SK-N-SH (cell line): ENCODE measurements at regions of chr7 and their contacts with region 1.

Region 1: GRCh38 chr7:92621026-92621540 is 30.9 kb upstream of the FAM133B start:
- DNase-seq: peak; percentile 53
- H3K4me3 ChIP-seq: peak overlapping the region in 1 of 2 experiments; percentile 20; a peak in 2 of 4 replicates
- H3K27ac ChIP-seq: peak overlapping the region; percentile 81 to 83
- H3K4me1 ChIP-seq: peaks cover 9 to 29% of the 10 kb centered on the region in 2 experiments
- H3K27me3 ChIP-seq: no peaks in the 10 kb centered on the region
- CTCF ChIP-seq: peak; percentile 97
- EP300 ChIP-seq: peak; percentile 55 to 69; a peak in 1 of 4 replicates
- RAD21 ChIP-seq: peak; percentile 99

Region 2: DNA sequence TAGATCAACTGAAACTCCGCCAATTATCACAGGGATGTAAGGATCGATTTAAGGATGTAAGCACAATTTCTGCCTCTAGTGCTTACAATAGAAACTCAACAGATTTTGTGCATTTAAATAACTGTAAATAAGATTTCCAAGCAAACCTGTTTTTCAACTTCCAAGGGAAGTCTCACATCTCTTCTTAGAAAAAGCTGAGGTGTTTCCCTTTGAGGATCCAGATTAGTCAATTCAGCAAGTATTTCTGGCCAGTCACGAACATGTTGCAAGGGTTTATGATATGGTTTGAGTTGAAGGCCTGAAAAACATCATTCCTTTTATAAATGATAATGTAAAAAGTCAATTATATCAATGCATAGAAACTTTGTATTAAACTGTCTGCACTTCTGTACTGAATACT is 399.3 kb before region 1 on chr7:
- CTCF ChIA-PET with region 1: no interaction called
- POLR2A ChIA-PET with region 1: no interaction called
- DNase-seq: no peak
- H3K4me3 ChIP-seq: no peak overlapping the region
- H3K27ac ChIP-seq: no peak overlapping the region
- H3K4me1 ChIP-seq: no peaks in the 10 kb centered on the region
- H3K27me3 ChIP-seq: no peaks in the 10 kb centered on the region
- CTCF ChIP-seq: no peak
- EP300 ChIP-seq: no peak
- RAD21 ChIP-seq: no peak

Region 3: DNA sequence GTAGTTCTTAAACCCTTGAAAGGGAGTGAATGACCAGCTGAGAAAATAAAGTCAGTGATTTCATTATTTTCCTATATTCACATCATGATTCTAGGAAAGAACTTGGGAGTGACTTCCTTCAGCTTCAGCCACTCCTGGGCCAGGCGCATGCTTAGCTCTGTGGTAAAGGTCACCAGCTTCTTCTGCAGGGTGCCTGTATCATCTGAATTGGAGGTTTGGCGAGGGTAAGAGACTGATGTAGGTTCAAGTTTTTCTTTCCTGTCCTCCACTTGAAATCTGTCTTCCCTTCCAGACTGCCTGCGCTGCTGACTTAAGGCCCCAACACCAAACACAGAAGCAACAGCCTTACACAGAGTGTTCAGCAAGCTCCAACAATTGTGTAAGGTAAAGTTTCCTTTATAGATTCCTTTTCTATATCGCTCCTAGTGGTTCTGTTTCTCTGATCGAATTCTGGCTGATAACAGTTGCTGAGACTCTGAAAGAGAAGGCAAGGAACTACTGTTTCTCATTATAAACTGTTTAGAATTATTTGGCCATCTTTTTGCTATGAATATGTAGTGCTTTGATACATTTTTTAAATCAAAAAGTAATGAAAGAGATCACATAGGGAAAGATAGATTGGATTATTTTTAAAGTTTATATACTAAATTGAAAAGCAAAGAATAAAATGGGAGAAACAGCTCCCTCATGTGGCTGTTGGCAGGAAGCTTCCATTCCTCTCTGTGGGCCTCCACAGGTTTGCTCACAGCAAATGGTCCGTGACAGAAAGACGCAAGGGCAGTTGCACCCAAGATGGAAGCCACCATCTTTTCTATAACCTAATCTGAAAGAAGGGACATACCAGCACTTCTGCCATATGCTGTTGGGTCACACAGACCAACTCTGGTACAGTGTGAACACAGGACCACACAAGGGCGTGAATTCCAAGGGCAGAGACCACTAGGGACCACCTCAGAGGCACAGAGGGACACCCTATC is 159.8 kb before region 1 on chr7:
- CTCF ChIA-PET with region 1: no interaction called
- POLR2A ChIA-PET with region 1: no interaction called
- DNase-seq: peak; percentile 68
- H3K4me3 ChIP-seq: no peak overlapping the region; a peak in 1 of 4 replicates
- H3K27ac ChIP-seq: no peak overlapping the region
- H3K4me1 ChIP-seq: peaks cover 0 to 4% of the 10 kb centered on the region in 2 experiments; a peak in 2 of 4 replicates
- H3K27me3 ChIP-seq: no peaks in the 10 kb centered on the region
- CTCF ChIP-seq: peak; percentile 98
- EP300 ChIP-seq: no peak
- RAD21 ChIP-seq: peak; percentile 74

Region 4: DNA sequence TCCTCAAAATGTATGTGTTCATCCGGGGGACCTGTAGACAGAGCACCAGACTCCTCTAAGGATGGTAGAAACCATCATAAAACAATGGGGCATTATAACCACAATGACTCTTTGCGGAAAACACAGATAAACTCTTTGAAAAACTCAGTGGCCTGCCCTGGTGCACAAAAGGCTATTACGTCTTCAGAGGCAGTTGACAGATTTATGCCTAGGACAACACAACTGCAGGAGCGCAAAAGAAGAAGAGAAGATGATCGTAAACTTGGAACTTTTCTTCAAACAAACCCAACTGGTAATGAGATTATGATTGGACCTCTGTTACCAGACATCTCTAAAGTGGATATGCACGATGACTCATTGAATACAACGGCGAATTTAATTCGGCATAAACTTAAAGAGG is 86.5 kb before region 1 on chr7:
- CTCF ChIA-PET with region 1: no interaction called
- POLR2A ChIA-PET with region 1: no interaction called
- DNase-seq: no peak
- H3K4me3 ChIP-seq: no peak overlapping the region
- H3K27ac ChIP-seq: no peak overlapping the region
- H3K4me1 ChIP-seq: peaks cover under 1 to 8% of the 10 kb centered on the region in 2 experiments; a peak in 3 of 4 replicates
- H3K27me3 ChIP-seq: no peaks in the 10 kb centered on the region
- CTCF ChIP-seq: no peak
- EP300 ChIP-seq: no peak
- RAD21 ChIP-seq: no peak

Region 5: GRCh38 chr7:92609921-92610518 is 11.1 kb before region 1 on chr7:
- CTCF ChIA-PET with region 1: interaction called, 38 read pairs
- POLR2A ChIA-PET with region 1: no interaction called
- DNase-seq: peak; percentile 43
- H3K4me3 ChIP-seq: no peak overlapping the region
- H3K27ac ChIP-seq: peak overlapping the region in 1 of 2 experiments; percentile 5; a peak in 1 of 4 replicates
- H3K4me1 ChIP-seq: peaks cover 6 to 25% of the 10 kb centered on the region in 2 experiments
- H3K27me3 ChIP-seq: no peaks in the 10 kb centered on the region
- CTCF ChIP-seq: peak; percentile 66
- EP300 ChIP-seq: no peak
- RAD21 ChIP-seq: peak; percentile 40

Region 6: DNA sequence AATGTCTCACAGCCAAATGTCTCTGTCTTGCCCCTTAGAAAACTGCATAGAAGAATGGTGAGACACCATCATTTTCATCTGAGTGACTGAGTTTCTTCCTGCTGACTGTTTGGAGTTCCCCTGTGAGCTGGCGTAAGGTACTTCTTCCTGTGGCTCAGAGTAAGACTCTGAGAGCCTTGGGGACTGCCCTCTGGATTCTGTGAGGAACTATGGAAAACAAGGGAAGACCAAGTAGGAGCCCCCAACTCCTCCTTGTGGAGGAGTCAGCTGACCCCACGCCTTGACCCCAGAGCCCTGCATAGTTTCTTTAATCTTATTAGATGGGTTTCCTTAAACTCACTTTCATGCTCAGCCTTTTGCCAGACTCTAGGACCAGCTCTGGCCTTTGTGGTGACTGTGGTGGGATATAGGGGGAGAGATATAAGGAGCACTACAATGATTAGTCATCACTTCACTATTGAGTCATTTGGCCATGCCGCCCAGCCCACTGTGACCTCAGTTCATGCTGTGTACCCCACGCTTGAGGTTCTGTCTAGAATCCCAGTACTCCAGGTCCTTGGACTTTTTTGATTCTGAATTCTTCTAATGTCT is 20.9 kb after region 1 on chr7:
- CTCF ChIA-PET with region 1: interaction called, 17 read pairs
- POLR2A ChIA-PET with region 1: no interaction called
- DNase-seq: no peak
- H3K4me3 ChIP-seq: no peak overlapping the region
- H3K27ac ChIP-seq: peak overlapping the region in 1 of 2 experiments; percentile 75; a peak in 3 of 4 replicates
- H3K4me1 ChIP-seq: peaks cover 27 to 50% of the 10 kb centered on the region in 2 experiments
- H3K27me3 ChIP-seq: no peaks in the 10 kb centered on the region
- CTCF ChIP-seq: no peak
- EP300 ChIP-seq: peak in 1 of 2 experiments; percentile 50; a peak in 1 of 4 replicates
- RAD21 ChIP-seq: no peak

Region 7: DNA sequence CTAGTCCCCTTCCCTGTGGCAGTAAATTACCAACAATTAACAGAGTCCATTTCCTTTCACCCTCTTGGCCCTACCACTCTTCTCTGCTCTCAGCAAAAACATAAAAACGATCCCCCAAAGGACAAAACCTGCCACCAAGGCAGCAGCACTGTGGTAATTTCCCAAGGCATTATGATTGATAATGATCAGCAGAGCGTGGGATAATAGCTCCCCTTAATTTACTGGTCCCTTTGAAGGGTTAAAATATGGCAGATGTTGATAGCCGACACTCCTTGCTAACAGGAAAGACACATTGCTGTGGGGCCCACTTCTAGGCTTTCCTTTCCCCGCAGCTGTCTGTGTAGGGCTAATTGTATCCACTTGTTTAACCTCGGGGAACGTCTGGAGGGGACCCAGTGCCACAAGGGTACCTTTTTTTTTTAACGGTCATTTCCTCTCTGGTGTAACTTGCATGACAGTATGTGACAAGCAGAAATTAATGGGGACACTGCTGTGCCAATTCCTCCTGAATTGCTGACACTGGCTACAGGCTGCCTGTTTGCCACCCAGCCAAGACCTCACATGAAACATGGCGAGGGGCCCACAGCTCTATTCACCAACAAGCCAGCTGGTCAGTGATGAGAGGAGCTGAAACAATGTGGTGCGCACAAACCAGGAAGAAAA is 134.0 kb after region 1 on chr7:
- CTCF ChIA-PET with region 1: interaction called, 12 read pairs
- POLR2A ChIA-PET with region 1: no interaction called
- DNase-seq: peak; percentile 45
- H3K4me3 ChIP-seq: no peak overlapping the region
- H3K27ac ChIP-seq: peak overlapping the region; percentile 80 to 98
- H3K4me1 ChIP-seq: peaks cover 31 to 34% of the 10 kb centered on the region in 2 experiments
- H3K27me3 ChIP-seq: no peaks in the 10 kb centered on the region
- CTCF ChIP-seq: no peak
- EP300 ChIP-seq: peak in 1 of 2 experiments; percentile 82; a peak in 2 of 4 replicates
- RAD21 ChIP-seq: 0 out of 2 replicates have a peak, but pooled peaks have one; percentile 1

Region 8: DNA sequence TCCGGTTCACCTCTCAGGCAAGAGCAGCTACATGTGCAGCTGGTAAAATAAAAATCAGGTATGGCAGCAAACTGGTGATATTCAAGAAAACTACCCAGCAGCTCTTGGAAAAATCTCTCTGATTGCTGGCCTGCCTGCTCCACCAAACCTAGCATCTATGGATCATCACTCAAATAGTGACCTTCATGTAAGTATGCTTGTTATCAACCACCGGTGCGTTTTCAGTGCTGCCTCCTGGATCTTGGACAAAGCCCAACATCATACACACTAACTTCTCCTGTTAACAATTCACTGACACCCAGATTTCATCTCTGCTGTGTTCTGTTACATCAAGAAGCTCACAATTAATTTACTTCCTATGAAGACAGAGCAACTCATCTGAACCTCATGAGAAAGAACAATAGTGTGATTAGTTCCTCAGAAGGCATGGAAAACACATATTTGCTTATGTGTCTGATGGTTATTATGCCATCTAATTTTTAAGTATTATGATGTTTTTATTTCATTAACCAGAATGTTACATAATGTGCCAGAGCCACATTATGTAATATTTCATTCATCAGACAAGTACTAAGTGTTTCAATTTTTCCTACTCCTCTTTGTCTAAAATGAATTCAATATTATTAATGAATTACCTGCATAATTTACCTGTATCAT is 206.5 kb after region 1 on chr7:
- CTCF ChIA-PET with region 1: interaction called, 96 read pairs
- POLR2A ChIA-PET with region 1: interaction called, 3 read pairs
- DNase-seq: peak; percentile 19
- H3K4me3 ChIP-seq: peak overlapping the region; percentile 6 to 10; a peak in 1 of 4 replicates
- H3K27ac ChIP-seq: peak overlapping the region; percentile 5 to 68; a peak in 3 of 4 replicates
- H3K4me1 ChIP-seq: peaks cover 31 to 39% of the 10 kb centered on the region in 2 experiments; a peak in 3 of 4 replicates
- H3K27me3 ChIP-seq: no peaks in the 10 kb centered on the region
- CTCF ChIP-seq: no peak
- EP300 ChIP-seq: no peak; a peak in 1 of 4 replicates
- RAD21 ChIP-seq: no peak

Region 9: DNA sequence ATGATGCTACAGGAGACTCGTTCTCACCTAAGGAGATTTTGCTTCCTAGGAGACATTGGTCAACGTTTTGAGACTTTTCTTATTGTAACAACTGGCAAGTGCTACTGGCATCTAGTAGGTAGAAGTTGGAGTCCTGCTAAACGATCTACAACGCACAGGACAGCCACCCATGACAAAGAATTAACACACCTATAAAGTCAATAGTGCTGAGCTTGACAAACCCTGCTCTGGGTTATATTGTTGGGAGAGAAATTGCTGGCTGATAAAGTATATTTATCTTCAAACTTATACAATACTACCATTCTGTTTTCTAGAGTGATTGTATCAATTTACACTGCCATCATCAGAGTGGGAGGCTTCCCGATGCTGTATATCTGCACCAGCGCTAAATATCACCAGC is 438.9 kb after region 1 on chr7:
- CTCF ChIA-PET with region 1: interaction called, 13 read pairs
- POLR2A ChIA-PET with region 1: no interaction called
- DNase-seq: no peak
- H3K4me3 ChIP-seq: no peak overlapping the region
- H3K27ac ChIP-seq: no peak overlapping the region
- H3K4me1 ChIP-seq: no peaks in the 10 kb centered on the region
- H3K27me3 ChIP-seq: no peaks in the 10 kb centered on the region; the same call in 1 of the 2 replicates
- CTCF ChIP-seq: no peak
- EP300 ChIP-seq: no peak
- RAD21 ChIP-seq: no peak